ENCODE measurements at regions of chr2 and their contacts with region 1.

Region 1: DNA sequence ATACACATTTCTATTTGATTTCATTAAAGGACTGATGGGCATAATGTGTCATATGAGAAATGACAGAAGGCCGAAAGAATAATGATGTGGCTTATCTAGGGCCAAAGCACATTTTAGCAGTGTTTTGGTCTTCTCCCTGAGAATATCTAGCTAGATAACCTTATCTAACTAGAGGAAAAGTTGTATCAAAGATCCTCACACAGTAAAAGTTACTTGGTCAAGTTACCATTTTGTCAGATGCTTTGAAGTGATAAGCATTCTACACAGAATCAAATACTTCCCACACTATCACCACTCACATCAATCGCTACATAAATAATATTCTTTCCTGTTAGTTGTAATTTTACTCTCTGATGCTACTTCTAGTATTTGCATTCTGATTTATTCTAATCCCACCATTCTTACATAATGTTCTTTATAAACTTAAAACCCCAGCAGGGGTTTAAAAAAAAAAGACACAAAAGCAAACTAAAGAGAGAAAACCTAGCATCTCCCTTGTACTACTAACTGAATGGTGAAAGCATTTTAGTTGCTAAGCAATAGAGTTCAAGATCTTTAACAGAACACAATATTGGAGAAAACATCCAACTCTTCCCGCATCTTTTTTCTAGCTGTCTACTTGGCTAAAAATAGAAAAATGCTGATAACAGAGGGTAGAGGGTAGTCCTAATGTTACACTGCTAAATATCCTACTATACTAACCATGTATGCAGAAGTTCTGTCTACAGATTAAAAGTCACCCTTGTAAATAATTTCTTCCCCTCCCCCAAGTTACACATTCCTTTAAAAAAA is 8.0 kb downstream of the XPO1 start:
- DNase-seq: no peak
- H3K4me3 Mint-ChIP-seq: no peak overlapping the region
- H3K27ac Mint-ChIP-seq: no peak overlapping the region
- H3K4me1 Mint-ChIP-seq: peaks cover 31% of the 10 kb centered on the region
- H3K27me3 Mint-ChIP-seq: no peaks in the 10 kb centered on the region

Region 2: DNA sequence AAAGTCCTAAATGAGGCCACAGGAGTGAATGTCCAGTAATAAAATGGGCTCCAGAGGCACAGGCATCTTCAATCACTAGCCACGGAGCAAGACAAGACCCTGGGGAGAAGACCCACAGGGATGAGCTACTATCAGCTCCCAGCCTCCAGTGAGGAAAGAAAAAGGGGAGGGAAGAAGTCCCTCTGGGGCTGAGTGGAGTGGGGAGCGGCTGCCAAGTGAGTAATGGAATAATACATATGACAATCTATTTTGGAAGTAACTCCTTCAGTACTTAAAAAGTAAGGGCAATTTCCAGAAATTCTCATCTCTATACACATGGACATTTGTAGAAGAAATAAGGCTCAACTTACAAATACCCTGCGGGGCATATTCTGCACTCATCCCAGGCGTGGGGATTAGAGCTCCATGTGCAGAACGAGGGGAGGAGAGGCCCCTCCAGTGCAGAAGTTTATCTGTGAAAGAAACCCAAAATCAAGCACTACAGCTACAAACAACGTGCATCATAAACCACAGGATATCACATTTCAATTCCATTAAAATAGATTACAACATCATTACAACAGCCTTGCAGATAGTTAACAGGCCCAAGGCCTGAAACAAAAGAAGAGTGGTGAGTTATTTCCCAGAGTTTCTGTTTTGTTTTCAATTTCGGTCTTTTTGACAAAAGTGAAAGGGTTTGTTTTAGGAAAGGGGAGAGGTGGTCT is 1061.6 kb before region 1 on chr2:
- intact Hi-C with region 1: no loop called
- DNase-seq: no peak
- H3K4me3 Mint-ChIP-seq: no peak overlapping the region
- H3K27ac Mint-ChIP-seq: no peak overlapping the region
- H3K4me1 Mint-ChIP-seq: no peaks in the 10 kb centered on the region
- H3K27me3 Mint-ChIP-seq: no peaks in the 10 kb centered on the region

Region 3: GRCh38 chr2:60515721-60516226 is 1014.4 kb before region 1 on chr2:
- intact Hi-C with region 1: no loop called
- DNase-seq: no peak
- H3K4me3 Mint-ChIP-seq: no peak overlapping the region
- H3K27ac Mint-ChIP-seq: no peak overlapping the region
- H3K4me1 Mint-ChIP-seq: peaks cover 5% of the 10 kb centered on the region
- H3K27me3 Mint-ChIP-seq: peaks cover 18% of the 10 kb centered on the region

Region 4: DNA sequence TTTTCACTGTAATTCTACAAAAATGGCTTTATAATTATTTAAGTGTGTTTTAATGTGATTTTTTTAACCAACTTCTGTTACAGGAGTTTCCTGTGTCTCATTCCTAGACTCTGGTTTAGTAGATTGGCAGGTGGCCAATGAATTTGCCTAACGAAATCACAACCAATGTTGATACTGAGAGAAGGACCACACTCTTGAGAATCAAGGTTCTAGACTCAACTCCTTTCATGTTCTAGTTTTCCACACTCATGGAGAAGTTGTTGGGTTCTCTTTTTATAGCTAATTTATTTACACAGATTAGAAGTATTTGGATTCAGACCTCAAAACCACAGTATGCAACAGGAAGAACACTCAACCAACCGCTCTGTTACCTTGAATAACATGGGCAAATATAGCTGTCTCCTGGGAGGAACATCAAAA is 36.6 kb before region 1 on chr2:
- intact Hi-C with region 1: loop called (anchors 5 kb)
- DNase-seq: no peak
- H3K4me3 Mint-ChIP-seq: no peak overlapping the region
- H3K27ac Mint-ChIP-seq: peak overlapping the region; percentile 42
- H3K4me1 Mint-ChIP-seq: peaks cover 20% of the 10 kb centered on the region
- H3K27me3 Mint-ChIP-seq: no peaks in the 10 kb centered on the region

Region 5: DNA sequence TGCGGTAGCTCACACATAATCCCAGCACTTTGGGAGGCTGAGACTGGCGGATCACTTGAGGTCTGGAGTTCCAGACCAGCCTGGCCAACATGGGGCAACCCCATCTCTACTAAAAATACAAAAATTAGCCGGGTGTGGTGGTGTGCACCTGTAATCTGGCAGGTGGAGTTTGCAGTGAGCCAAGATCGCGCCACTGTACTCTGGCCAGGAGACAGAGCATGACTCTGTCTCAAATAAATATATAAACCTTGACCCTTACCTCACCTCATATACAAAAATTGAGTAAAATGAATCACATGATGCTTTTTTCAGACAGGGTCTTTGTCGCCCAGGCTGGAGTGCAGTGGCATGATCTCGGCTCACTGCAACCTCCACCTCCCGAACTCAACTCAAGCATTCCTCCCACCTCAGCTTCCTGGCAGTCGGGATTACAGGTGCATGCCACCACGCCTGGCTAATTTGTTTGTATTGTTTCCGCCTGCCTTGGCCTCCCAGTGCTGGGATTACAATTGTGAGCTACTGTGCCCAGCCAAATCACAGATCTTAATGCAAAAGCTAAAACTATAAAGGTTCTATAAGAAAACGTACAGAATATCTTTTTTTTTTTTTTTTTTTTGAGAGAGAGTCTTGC is 17.3 kb before region 1 on chr2:
- intact Hi-C with region 1: loop called (anchors 1 kb)
- DNase-seq: no peak
- H3K4me3 Mint-ChIP-seq: no peak overlapping the region
- H3K27ac Mint-ChIP-seq: no peak overlapping the region
- H3K4me1 Mint-ChIP-seq: no peaks in the 10 kb centered on the region
- H3K27me3 Mint-ChIP-seq: no peaks in the 10 kb centered on the region

Region 6: DNA sequence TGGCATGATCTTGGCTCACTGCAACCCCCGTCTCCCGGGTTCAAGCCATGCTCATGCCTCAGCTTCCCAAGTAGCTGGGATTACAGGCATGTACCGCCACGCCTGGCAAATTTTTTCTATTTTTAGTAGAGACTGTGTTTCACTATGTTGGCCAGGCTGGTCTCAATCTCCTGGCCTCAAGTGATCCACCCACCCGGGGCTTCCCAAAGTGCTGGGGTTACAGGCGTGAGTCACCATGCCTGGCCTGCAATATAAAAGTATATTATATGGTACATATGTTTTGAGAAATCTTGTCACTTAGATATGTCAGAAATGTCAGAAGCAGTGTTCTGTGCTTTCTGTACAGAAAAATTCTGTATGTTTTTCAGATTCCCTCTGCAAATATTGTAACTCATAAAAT is 27.2 kb after region 1 on chr2:
- intact Hi-C with region 1: no loop called
- DNase-seq: no peak
- H3K4me3 Mint-ChIP-seq: no peak overlapping the region
- H3K27ac Mint-ChIP-seq: no peak overlapping the region
- H3K4me1 Mint-ChIP-seq: no peaks in the 10 kb centered on the region
- H3K27me3 Mint-ChIP-seq: no peaks in the 10 kb centered on the region

Region 7: GRCh38 chr2:62270728-62271127 is 740.6 kb after region 1 on chr2:
- intact Hi-C with region 1: no loop called
- DNase-seq: no peak
- H3K4me3 Mint-ChIP-seq: no peak overlapping the region
- H3K27ac Mint-ChIP-seq: no peak overlapping the region
- H3K4me1 Mint-ChIP-seq: no peaks in the 10 kb centered on the region
- H3K27me3 Mint-ChIP-seq: peaks cover 7% of the 10 kb centered on the region